B cell (primary cell): ENCODE measurements at regions of chr9 and their contacts with region 1.

Region 1: DNA sequence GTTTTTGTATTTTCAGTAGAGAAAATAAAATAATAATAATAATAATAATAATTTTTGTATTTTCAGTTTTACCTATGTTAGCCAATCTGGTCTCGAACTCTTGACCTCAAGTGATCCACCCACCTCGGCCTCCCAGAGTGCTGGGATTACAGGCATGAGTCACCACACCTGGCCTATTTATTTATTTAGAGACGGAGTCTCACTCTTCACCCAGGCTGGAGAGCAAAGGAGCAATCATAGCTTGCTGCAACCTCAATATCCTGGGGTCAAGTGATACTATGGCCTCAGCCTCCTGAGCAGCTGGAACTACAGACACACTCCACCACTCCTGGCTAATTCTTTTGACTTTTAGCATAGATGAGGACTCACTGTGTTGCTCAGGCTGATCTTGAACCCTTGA is 167.5 kb downstream of the TLE1 start:
- DNase-seq: no peak
- ATAC-seq: no peak
- H3K4me3 ChIP-seq: no peak overlapping the region
- H3K4me3 Mint-ChIP-seq: no peak overlapping the region
- H3K27ac ChIP-seq: no peak overlapping the region
- H3K27ac Mint-ChIP-seq: no peak overlapping the region
- H3K4me1 ChIP-seq: peaks cover 0 to 7% of the 10 kb centered on the region in 2 donors
- H3K4me1 Mint-ChIP-seq: peaks cover 8% of the 10 kb centered on the region
- H3K27me3 ChIP-seq: peaks cover 0 to 5% (median 2%) of the 10 kb centered on the region in 4 experiments
- H3K27me3 Mint-ChIP-seq: peaks cover 20% of the 10 kb centered on the region
- CTCF ChIP-seq: no peak

Region 2: DNA sequence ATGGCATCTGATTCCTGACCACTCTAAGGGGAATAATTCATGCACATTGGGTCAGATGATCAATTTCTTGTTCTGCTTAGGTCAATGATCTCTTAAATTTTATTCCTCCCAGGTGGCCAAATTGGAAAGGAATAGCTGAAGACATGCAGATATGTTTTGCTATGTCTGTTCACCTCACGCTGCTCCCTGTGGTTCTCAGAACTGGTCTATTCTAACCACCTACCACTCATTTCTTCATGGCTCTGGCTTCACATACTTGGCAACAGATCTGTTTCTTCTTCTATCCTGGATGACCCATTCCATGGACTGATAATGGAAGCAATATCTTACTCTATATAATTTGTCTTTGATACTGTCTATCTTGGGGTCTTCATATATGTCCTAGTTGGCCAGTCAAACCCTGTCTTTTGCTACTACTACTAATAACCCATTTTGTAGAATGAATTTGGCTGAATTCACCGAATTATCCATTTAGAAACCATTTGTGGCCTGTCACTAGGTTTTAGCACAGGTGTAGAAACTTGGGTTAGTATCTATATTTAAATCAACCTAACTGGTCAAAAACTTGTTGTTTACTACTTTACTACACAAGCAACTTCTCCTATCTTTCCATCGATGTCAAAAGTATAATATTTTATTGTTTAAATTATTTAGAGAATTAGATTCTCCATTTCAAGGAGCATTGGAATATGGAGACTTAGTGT is 1299.3 kb before region 1 on chr9:
- CTCF ChIA-PET with region 1: no interaction called
- POLR2A ChIA-PET with region 1: no interaction called
- intact Hi-C with region 1: no loop called
- DNase-seq: no peak
- ATAC-seq: no peak
- H3K4me3 ChIP-seq: no peak overlapping the region
- H3K4me3 Mint-ChIP-seq: no peak overlapping the region
- H3K27ac ChIP-seq: no peak overlapping the region
- H3K27ac Mint-ChIP-seq: no peak overlapping the region
- H3K4me1 ChIP-seq: no peaks in the 10 kb centered on the region
- H3K4me1 Mint-ChIP-seq: no peaks in the 10 kb centered on the region
- H3K27me3 ChIP-seq: no peaks in the 10 kb centered on the region
- H3K27me3 Mint-ChIP-seq: no peaks in the 10 kb centered on the region
- CTCF ChIP-seq: no peak

Region 3: GRCh38 chr9:81506941-81507864 is 14.7 kb before region 1 on chr9:
- CTCF ChIA-PET with region 1: interaction called, 13 read pairs
- POLR2A ChIA-PET with region 1: no interaction called
- intact Hi-C with region 1: no loop called
- DNase-seq: no peak
- ATAC-seq: no peak
- H3K4me3 ChIP-seq: no peak overlapping the region
- H3K4me3 Mint-ChIP-seq: no peak overlapping the region
- H3K27ac ChIP-seq: no peak overlapping the region
- H3K27ac Mint-ChIP-seq: no peak overlapping the region
- H3K4me1 ChIP-seq: peaks cover 0 to 6% of the 10 kb centered on the region in 2 donors
- H3K4me1 Mint-ChIP-seq: peaks cover 4% of the 10 kb centered on the region
- H3K27me3 ChIP-seq: peaks cover 0 to 6% (median 1%) of the 10 kb centered on the region in 4 experiments
- H3K27me3 Mint-ChIP-seq: peaks cover 17% of the 10 kb centered on the region
- CTCF ChIP-seq: no peak

Region 4: DNA sequence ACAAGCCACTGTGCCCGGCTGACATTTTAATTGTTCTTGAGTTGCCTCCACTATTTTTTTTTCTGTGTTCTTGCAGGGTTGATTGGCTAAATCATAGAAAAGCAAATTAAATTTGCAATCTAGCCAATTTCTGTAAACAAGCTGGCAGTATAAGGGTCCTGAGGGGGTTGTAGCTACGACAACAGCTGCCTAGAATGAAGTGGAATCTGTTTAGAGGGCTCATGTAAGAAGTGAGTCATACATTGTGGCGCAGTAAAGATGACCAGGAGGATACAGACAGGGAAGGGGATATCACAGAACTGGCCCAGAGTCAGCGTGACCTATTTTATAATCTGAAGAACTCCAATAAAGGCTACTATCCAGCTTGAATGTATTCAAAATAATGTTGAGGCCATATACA is 249.7 kb after region 1 on chr9:
- CTCF ChIA-PET with region 1: interaction called, 15 read pairs
- POLR2A ChIA-PET with region 1: no interaction called
- intact Hi-C with region 1: loop called (anchors 1 kb)
- DNase-seq: no peak
- ATAC-seq: no peak
- H3K4me3 ChIP-seq: no peak overlapping the region
- H3K4me3 Mint-ChIP-seq: no peak overlapping the region
- H3K27ac ChIP-seq: no peak overlapping the region
- H3K27ac Mint-ChIP-seq: no peak overlapping the region
- H3K4me1 ChIP-seq: no peaks in the 10 kb centered on the region
- H3K4me1 Mint-ChIP-seq: no peaks in the 10 kb centered on the region
- H3K27me3 ChIP-seq: no peaks in the 10 kb centered on the region
- H3K27me3 Mint-ChIP-seq: peaks cover 3% of the 10 kb centered on the region
- CTCF ChIP-seq: no peak

Region 5: DNA sequence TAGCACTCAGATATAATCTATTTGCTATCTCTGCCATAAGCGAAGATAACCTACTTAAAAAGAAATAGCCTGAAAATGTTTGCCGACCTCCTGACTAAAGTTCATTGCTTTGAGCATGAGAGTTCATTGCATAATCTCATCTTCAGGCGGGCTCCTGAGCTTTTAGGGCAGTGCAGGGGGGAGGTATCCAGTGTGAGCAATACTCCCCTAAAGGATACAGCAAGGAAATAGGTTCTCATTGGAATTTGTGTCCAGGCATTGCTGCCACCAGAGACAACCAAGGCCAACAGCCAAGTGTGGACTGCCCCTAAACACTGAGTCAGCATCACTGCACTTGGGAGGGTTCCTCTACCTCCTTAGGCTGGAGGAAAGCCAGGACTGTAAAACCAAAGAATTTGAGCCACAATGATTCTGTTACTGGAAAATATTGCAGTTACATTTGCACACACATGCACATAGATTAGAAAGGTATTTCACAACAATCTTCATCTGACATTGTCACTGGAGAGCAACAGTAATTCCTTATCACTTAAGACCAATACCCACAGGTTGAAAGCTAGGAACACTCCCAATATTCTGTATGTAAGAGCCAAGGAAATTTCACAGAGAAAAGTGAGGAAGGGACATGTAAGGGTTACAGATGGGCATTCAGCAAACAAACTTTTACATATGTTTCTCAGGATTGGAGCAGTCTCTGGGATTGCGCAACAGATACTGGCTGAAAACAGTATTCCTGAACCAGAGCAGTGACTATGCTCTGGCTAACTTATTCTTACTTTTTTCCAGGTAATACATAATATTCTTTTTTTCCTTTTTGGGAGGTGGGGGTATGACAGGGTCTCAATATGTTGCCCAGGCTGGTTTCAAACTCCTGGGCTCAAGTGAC is 266.1 kb after region 1 on chr9:
- CTCF ChIA-PET with region 1: no interaction called
- POLR2A ChIA-PET with region 1: no interaction called
- intact Hi-C with region 1: no loop called
- DNase-seq: no peak
- ATAC-seq: no peak
- H3K4me3 ChIP-seq: no peak overlapping the region
- H3K4me3 Mint-ChIP-seq: no peak overlapping the region
- H3K27ac ChIP-seq: no peak overlapping the region
- H3K27ac Mint-ChIP-seq: no peak overlapping the region
- H3K4me1 ChIP-seq: no peaks in the 10 kb centered on the region
- H3K4me1 Mint-ChIP-seq: no peaks in the 10 kb centered on the region
- H3K27me3 ChIP-seq: no peaks in the 10 kb centered on the region
- H3K27me3 Mint-ChIP-seq: no peaks in the 10 kb centered on the region
- CTCF ChIP-seq: no peak

Region 6: DNA sequence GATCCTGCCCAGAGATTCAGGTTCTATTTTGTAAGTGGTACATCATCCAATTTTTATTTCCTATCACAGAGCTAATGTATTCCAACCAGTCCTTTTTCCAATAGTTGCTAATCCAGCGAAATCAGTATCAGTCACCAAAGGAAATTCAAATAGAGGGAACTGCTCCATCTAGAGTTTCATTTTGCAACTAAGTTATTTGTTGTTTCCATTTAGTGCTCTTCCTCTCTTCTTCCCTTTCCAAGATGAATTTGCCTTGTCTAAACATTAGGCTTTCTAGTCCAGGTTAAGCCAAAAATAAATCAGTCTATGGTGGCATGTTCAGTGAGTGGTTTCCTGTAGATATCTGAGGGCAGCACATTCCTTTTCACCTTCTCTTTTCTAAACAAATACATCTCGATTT is 326.6 kb after region 1 on chr9:
- CTCF ChIA-PET with region 1: interaction called, 15 read pairs
- POLR2A ChIA-PET with region 1: no interaction called
- intact Hi-C with region 1: no loop called
- DNase-seq: no peak
- ATAC-seq: no peak
- H3K4me3 ChIP-seq: no peak overlapping the region
- H3K4me3 Mint-ChIP-seq: no peak overlapping the region
- H3K27ac ChIP-seq: no peak overlapping the region
- H3K27ac Mint-ChIP-seq: no peak overlapping the region
- H3K4me1 ChIP-seq: no peaks in the 10 kb centered on the region
- H3K4me1 Mint-ChIP-seq: no peaks in the 10 kb centered on the region
- H3K27me3 ChIP-seq: no peaks in the 10 kb centered on the region
- H3K27me3 Mint-ChIP-seq: no peaks in the 10 kb centered on the region
- CTCF ChIP-seq: no peak

Region 7: GRCh38 chr9:82606492-82607382 is 1084.8 kb after region 1 on chr9:
- CTCF ChIA-PET with region 1: interaction called, 84 read pairs
- POLR2A ChIA-PET with region 1: no interaction called
- intact Hi-C with region 1: no loop called
- DNase-seq: peak; percentile 68
- ATAC-seq: peak; percentile 33
- H3K4me3 ChIP-seq: no peak overlapping the region
- H3K4me3 Mint-ChIP-seq: no peak overlapping the region
- H3K27ac ChIP-seq: no peak overlapping the region
- H3K27ac Mint-ChIP-seq: no peak overlapping the region
- H3K4me1 ChIP-seq: no peaks in the 10 kb centered on the region
- H3K4me1 Mint-ChIP-seq: no peaks in the 10 kb centered on the region
- H3K27me3 ChIP-seq: no peaks in the 10 kb centered on the region
- H3K27me3 Mint-ChIP-seq: no peaks in the 10 kb centered on the region
- CTCF ChIP-seq: peak; percentile 65